AG04450 (cell line): ENCODE measurements at regions of chr22 and their contacts with region 1.

Region 1: DNA sequence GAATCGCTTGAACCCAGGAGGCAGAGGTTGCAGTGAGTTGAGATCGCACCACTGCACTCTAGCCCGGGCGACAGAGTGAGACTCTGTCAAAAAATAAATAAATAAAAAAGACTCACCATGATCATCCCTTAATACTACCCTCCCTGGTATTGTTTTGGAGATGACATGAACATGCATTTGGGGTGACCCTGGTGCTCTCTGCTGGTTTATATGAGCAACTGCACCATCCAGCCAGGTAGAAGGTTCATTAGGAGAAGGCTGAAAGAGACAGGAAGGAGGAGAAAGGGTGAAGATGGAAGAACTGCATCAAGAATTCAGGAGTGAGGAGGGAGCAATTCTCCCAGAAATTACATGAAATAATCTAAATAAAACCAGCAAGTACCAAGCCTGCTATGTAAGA is 37.8 kb downstream of the SLC5A1 start:
- DNase-seq: peak; percentile 6
- H3K4me3 ChIP-seq: no peak overlapping the region
- H3K27ac ChIP-seq: no peak overlapping the region
- H3K27me3 ChIP-seq: peaks cover 5% of the 10 kb centered on the region
- CTCF ChIP-seq: peak; percentile 64

Region 2: DNA sequence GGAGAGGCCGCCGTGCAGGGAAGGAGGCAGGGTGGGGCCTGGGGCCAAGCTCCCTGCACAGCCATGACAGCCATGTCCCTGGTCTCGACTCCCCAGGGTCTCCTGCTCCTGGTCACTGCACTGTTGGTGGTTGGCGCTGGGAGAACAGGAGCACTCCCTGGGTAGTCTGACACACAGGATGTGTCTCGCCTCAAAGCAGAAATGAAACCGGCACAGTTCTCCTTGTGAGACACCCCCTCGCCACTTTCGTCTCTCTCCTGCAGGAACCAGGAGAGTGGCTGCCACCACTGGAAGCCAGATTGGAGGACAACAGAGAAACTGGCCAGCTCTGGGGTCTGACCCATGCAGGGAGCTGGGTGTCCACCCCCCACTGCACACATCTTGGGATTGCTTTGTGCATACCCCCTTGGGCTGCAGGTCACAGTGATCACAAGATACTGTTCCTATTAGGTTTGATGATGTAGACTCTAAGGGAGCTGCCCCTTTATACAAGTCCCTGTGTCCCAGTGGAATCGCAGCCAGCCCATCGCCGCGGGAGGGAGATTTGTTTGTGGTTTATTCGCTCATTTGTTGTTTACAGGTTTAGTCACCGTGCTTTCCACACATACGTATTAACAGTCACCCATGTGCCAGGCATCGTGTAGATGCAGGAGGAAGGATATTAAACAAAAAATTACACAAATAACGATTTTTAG is 163.5 kb before region 1 on chr22:
- CTCF ChIA-PET with region 1: no interaction called
- POLR2A ChIA-PET with region 1: no interaction called
- DNase-seq: no peak
- H3K4me3 ChIP-seq: no peak overlapping the region
- H3K27ac ChIP-seq: no peak overlapping the region
- H3K27me3 ChIP-seq: peaks cover 2% of the 10 kb centered on the region
- CTCF ChIP-seq: no peak

Region 3: GRCh38 chr22:31977141-31977841 is 103.6 kb before region 1 on chr22:
- CTCF ChIA-PET with region 1: interaction called, 33 read pairs
- POLR2A ChIA-PET with region 1: no interaction called
- DNase-seq: peak; percentile 13
- H3K4me3 ChIP-seq: no peak overlapping the region
- H3K27ac ChIP-seq: no peak overlapping the region
- H3K27me3 ChIP-seq: peaks cover 2% of the 10 kb centered on the region
- CTCF ChIP-seq: peak; percentile 82